ENCODE measurements at regions of chr4 and their contacts with region 1.

Region 1: DNA sequence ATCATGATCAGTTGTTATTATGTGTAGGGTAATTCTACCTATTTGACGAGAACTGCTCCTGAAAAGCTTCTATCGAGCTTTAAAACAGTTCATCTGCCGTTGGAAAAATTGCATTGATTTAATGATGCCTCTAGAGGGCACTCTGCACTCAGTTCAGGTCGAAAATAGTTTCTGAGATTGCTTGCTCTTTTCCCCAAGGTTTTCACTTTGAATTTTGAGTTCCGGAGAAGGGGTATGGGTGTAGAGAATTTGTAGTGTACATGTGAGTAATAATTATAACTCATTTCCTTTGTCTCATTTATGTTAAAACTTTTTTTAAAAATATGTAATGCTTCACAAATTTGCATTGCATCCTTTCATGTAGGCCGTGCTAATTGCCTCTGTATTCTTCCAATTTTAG is 28.4 kb upstream of the TNIP3 start:
- DNase-seq: no peak
- H3K4me3 ChIP-seq: no peak overlapping the region
- CTCF ChIP-seq: peak; percentile 42

Region 2: DNA sequence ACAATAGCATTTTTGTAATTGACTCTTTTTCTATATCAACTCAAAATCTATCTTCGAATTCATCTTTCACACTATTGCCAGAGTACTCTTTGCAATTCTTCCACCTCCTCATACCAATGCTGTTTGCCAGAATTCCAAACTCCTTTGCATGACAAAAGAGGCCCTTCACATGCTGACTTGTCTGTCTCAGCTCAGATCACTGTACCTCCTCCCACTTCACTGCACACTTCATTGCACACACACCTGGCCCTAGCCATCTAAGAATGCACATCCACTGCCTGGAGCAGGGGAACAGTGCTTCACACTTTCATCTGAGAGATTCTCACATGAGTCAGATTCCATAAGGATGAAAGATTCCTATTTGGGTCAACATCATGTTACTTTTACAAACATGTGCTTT is 326.5 kb before region 1 on chr4:
- CTCF ChIA-PET with region 1: no interaction called
- POLR2A ChIA-PET with region 1: no interaction called
- DNase-seq: no peak
- H3K4me3 ChIP-seq: no peak overlapping the region
- CTCF ChIP-seq: no peak

Region 3: DNA sequence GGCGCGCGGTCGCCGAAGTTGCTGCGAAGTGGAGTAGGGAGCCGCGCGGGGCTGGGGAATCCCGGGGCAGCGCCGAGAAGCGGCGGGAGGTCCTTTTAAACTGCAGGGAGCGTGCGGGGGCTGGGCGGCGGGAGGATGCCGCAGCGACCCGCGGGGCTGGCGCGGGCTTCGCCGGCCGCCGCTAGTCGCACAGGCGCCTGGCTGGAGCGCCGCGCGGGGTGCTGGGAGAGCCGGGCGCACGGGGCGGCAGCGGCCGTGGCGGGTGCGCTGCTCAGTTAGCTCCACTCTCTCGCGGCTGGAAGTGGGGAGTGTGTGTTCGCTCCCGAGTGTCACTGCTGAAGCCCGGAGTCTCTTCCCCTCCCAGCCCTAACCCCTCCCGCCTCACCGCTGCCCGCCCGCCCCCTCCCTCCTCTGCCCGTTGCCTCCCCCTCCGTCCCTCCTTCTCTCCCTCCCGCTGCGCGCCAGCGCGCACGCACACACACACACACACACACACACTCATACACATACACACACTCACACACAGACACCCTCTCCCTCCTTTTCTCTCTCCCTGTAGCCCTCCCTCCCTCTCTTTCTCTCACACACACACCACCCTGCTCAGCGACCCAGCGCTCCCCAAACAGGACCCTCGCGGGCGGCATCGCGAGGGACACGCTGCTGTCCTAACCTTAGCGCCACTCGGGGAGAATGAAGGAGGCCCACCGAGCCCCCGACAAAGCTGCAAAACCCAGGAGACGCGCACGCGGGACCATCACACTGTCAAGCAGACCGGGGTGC is 120.1 kb before region 1 on chr4 and contains the start of gene NDNF:
- CTCF ChIA-PET with region 1: no interaction called
- POLR2A ChIA-PET with region 1: no interaction called
- DNase-seq: no peak
- H3K4me3 ChIP-seq: peak within 1 kb of the TSS; percentile 57
- CTCF ChIP-seq: no peak

Region 4: GRCh38 chr4:121156822-121157769 is 35.4 kb before region 1 on chr4:
- CTCF ChIA-PET with region 1: interaction called, 10 read pairs
- POLR2A ChIA-PET with region 1: no interaction called
- DNase-seq: no peak
- H3K4me3 ChIP-seq: peak overlapping the region; percentile 58
- CTCF ChIP-seq: no peak

Region 5: DNA sequence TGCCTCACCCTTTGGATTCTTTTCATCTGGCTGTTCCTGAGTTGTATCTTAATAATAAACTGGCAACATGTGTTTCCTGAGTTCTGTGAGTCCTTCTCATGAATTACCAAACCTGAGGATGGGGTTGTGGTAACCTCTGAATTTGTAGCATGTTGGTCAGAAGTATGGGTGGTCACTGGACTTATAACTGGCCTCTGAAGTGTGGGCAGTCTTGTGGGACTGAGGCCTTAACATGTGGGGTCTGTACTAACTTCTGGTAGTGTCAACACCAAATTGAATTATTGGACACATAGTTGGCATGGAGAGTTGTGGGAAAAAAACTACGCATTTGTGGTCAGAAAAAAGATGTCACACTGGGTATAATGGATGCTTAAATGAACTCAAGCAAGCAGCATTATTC is 16.7 kb after region 1 on chr4:
- CTCF ChIA-PET with region 1: interaction called, 22 read pairs
- POLR2A ChIA-PET with region 1: no interaction called
- DNase-seq: no peak
- H3K4me3 ChIP-seq: no peak overlapping the region
- CTCF ChIP-seq: no peak

Region 6: GRCh38 chr4:121243485-121243884 is 51.0 kb after region 1 on chr4:
- CTCF ChIA-PET with region 1: interaction called, 173 read pairs
- POLR2A ChIA-PET with region 1: no interaction called
- DNase-seq: no peak
- H3K4me3 ChIP-seq: peak overlapping the region; percentile 25; the same call in 1 of the 2 replicates
- CTCF ChIP-seq: no peak

Region 7: GRCh38 chr4:121307445-121308327 is 115.2 kb after region 1 on chr4:
- CTCF ChIA-PET with region 1: interaction called, 20 read pairs
- POLR2A ChIA-PET with region 1: no interaction called
- DNase-seq: peak; percentile 2
- H3K4me3 ChIP-seq: no peak overlapping the region
- CTCF ChIP-seq: peak; percentile 62

Region 8: GRCh38 chr4:121397941-121398601 is 205.6 kb after region 1 on chr4:
- CTCF ChIA-PET with region 1: no interaction called
- POLR2A ChIA-PET with region 1: no interaction called
- DNase-seq: no peak
- H3K4me3 ChIP-seq: no peak overlapping the region
- CTCF ChIP-seq: no peak

Region 9: GRCh38 chr4:121791481-121791880 is 599.0 kb after region 1 on chr4:
- CTCF ChIA-PET with region 1: no interaction called
- POLR2A ChIA-PET with region 1: no interaction called
- DNase-seq: peak; percentile 74
- H3K4me3 ChIP-seq: no peak overlapping the region
- CTCF ChIP-seq: no peak

Measured in AG04449 (cell line).